Sigmoid colon (tissue), 7 donors: ENCODE measurements at regions of chr1 and their contacts with region 1.

Region 1: GRCh38 chr1:27044613-27045151 is 32.0 kb upstream of the TENT5B start:
- DNase-seq: peak; percentile 93
- H3K4me3 ChIP-seq: peak overlapping the region in 3 of 4 donors; percentile 2 to 24 (median 18)
- H3K27ac ChIP-seq: no peak overlapping the region
- H3K4me1 ChIP-seq: peaks cover 0 to 20% (median 13%) of the 10 kb centered on the region in 4 donors
- H3K27me3 ChIP-seq: no peaks in the 10 kb centered on the region
- CTCF ChIP-seq: peak; percentile 95 to 99 (median 97)
- EP300 ChIP-seq: no peak
- POLR2A ChIP-seq: no peak

Region 2: DNA sequence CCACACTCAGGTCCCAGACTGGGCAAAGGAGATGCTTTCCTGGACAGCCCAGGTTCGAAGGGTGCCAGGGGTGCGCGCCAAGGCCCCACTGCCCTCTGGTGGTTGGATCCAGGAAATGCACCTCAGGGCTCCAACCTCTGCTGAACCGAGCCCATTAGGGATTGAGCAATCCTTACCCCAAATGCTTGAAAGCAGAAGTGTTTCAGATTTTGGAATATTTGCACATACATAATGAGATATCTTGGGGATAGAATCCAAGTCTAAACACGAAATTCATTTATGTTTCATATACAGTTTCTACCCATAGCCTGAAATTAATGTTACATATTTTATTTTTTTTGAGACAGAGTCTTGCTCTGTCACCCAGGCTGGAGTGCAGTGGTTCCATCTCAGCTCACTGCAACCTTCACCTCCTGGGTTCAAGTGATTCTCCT is 52.8 kb after region 1 on chr1:
- intact Hi-C with region 1: loop called (anchors 1 kb)
- DNase-seq: peak; percentile 92
- H3K4me3 ChIP-seq: no peak overlapping the region
- H3K27ac ChIP-seq: no peak overlapping the region
- H3K4me1 ChIP-seq: peaks cover 0 to 27% (median 23%) of the 10 kb centered on the region in 4 donors
- H3K27me3 ChIP-seq: no peaks in the 10 kb centered on the region
- CTCF ChIP-seq: peak; percentile 95 to 98 (median 96)
- EP300 ChIP-seq: no peak
- POLR2A ChIP-seq: no peak

Region 3: DNA sequence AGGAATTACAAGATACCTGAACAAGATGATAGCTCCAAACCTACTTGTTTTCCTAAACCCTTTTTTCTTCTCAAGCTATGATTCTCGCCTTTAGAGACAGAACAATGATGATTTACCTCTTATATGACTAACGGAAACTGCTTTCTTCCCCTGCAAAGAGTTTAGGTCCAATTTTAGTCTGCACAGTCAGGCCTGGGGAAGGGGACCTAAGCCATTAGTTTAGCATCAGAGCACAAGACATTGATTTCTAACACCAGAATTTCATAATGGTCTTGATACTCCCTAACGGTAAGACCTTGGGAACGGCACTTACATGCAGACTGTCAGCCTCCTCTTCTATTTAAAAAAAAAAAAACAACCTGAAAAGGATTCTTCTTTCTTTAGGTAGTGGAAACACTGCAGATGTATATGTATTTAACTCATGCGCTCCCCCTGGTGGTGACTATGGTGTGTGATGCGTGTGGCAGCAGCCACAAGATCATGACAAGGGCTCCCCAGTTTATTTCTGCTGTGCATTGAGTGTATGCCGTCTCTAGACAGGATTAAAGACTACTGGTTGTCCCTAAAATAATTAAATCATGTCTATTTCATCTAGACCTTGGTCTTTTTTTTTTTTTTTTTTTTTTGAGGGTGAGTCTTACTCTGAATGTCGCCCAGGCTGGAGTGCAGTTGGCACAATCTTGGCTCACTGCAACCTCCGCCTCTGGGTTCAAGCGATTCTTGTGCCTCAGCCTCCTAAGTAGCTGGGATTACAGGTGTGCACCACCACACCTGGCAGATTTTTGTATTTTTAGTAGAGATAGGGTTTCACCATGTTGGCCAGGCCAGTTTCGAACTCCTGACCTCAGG is 240.0 kb after region 1 on chr1:
- intact Hi-C with region 1: loop called (anchors 5 kb)
- DNase-seq: peak; percentile 88
- H3K4me3 ChIP-seq: no peak overlapping the region
- H3K27ac ChIP-seq: no peak overlapping the region
- H3K4me1 ChIP-seq: no peaks in the 10 kb centered on the region
- H3K27me3 ChIP-seq: no peaks in the 10 kb centered on the region
- CTCF ChIP-seq: peak; percentile 58 to 80 (median 72)
- EP300 ChIP-seq: no peak
- POLR2A ChIP-seq: no peak